ENCODE measurements at regions of chr11 and their contacts with region 1.

Region 1: GRCh38 chr11:15169815-15170551 is 55.3 kb downstream of the INSC start:
- H3K4me3 ChIP-seq: no peak overlapping the region
- H3K27ac ChIP-seq: no peak overlapping the region
- H3K4me1 ChIP-seq: no peaks in the 10 kb centered on the region
- CTCF ChIP-seq: no peak

Region 2: DNA sequence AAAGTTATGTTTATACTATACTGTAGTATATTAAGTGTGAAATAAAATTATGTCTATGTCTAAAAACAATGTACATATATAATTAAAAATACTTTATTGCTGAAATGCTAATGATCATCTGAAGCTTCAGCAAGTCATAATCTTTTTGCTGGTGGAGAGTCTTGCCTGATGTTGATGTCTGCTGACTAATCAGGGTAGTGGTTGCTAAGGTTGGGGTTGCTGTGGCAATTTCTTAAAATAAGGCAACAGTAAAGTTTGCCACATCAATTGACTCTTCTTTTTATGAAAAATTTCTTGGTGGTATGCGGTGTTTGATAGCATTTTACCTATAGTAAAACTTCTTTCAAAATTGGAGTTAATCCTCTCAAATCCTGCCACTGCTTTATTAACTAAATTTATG is 33.8 kb before region 1 on chr11:
- CTCF ChIA-PET with region 1: no interaction called
- POLR2A ChIA-PET with region 1: no interaction called
- H3K4me3 ChIP-seq: no peak overlapping the region
- H3K27ac ChIP-seq: no peak overlapping the region
- H3K4me1 ChIP-seq: no peaks in the 10 kb centered on the region
- CTCF ChIP-seq: no peak

Region 3: GRCh38 chr11:15159085-15159484 is 10.9 kb before region 1 on chr11:
- CTCF ChIA-PET with region 1: interaction called, 14 read pairs
- POLR2A ChIA-PET with region 1: no interaction called
- H3K4me3 ChIP-seq: no peak overlapping the region
- H3K27ac ChIP-seq: no peak overlapping the region
- H3K4me1 ChIP-seq: no peaks in the 10 kb centered on the region
- CTCF ChIP-seq: no peak